ENCODE measurements at regions of chr6 and their contacts with region 1.

Region 1: GRCh38 chr6:87701676-87702588 is at the start of gene AKIRIN2:
- DNase-seq: peak; percentile 99
- total RNA-seq, gene AKIRIN2: 52.8 TPM

Region 2: GRCh38 chr6:87154993-87155841 is 546.7 kb before region 1 on chr6 and contains the start of gene ZNF292:
- intact Hi-C with region 1: loop called (anchors 2 kb)
- DNase-seq: peak; percentile 98
- total RNA-seq, gene ZNF292: 34.5 TPM

Region 3: GRCh38 chr6:87472525-87473418 is 229.2 kb before region 1 on chr6 and contains the start of gene SLC35A1:
- intact Hi-C with region 1: loop called (anchors 2 kb)
- DNase-seq: peak; percentile 94
- total RNA-seq, gene SLC35A1: 10.9 TPM

Region 4: GRCh38 chr6:87494761-87495422 is 207.0 kb before region 1 on chr6:
- intact Hi-C with region 1: no loop called
- DNase-seq: no peak

Region 5: GRCh38 chr6:87589693-87590549 is 112.0 kb before region 1 on chr6 and contains the starts of genes ORC3 and RARS2:
- intact Hi-C with region 1: loop called (anchors 5 kb)
- DNase-seq: peak; percentile 99
- total RNA-seq, gene ORC3: 23.0 TPM
- total RNA-seq, gene RARS2: 23.6 TPM

Region 6: GRCh38 chr6:87660226-87660911 is 41.6 kb before region 1 on chr6:
- intact Hi-C with region 1: loop called (anchors 2 kb)
- DNase-seq: no peak

Region 7: GRCh38 chr6:87799651-87800050 is 97.7 kb after region 1 on chr6:
- intact Hi-C with region 1: loop called (anchors 10 kb)
- DNase-seq: no peak